ENCODE measurements at regions of chr7 and their contacts with region 1.

Region 1: GRCh38 chr7:12686894-12687717 is at the start of gene ARL4A:
- DNase-seq: peak; percentile 97
- H3K4me3 Mint-ChIP-seq: peak within 1 kb of the TSS; percentile 96
- H3K27ac Mint-ChIP-seq: peak within 1 kb of the TSS; percentile 92
- H3K4me1 Mint-ChIP-seq: peaks cover 26% of the 10 kb centered on the region
- H3K27me3 Mint-ChIP-seq: no peaks in the 10 kb centered on the region
- total RNA-seq, gene ARL4A: 8.1 to 10.0 TPM

Region 2: GRCh38 chr7:12403287-12404181 is 283.6 kb before region 1 on chr7 and contains the start of gene VWDE:
- CTCF ChIA-PET with region 1: no interaction called
- intact Hi-C with region 1: loop called (anchors 2 kb)
- DNase-seq: peak; percentile 76
- H3K4me3 Mint-ChIP-seq: peak within 1 kb of the TSS; percentile 75
- H3K27ac Mint-ChIP-seq: peak within 1 kb of the TSS; percentile 77
- H3K4me1 Mint-ChIP-seq: peaks cover 9% of the 10 kb centered on the region
- H3K27me3 Mint-ChIP-seq: peaks cover 14% of the 10 kb centered on the region
- total RNA-seq, gene VWDE: 1.5 to 1.9 TPM

Region 3: GRCh38 chr7:12638851-12639467 is 48.1 kb before region 1 on chr7:
- CTCF ChIA-PET with region 1: interaction called, 11 read pairs
- intact Hi-C with region 1: loop called (anchors 1 kb)
- DNase-seq: no peak
- H3K4me3 Mint-ChIP-seq: no peak overlapping the region
- H3K27ac Mint-ChIP-seq: no peak overlapping the region
- H3K4me1 Mint-ChIP-seq: peaks cover 19% of the 10 kb centered on the region
- H3K27me3 Mint-ChIP-seq: no peaks in the 10 kb centered on the region

Region 4: GRCh38 chr7:12731214-12731656 is 44.1 kb after region 1 on chr7:
- CTCF ChIA-PET with region 1: interaction called, 3 read pairs
- intact Hi-C with region 1: loop called (anchors 1 kb)
- DNase-seq: peak; percentile 30
- H3K4me3 Mint-ChIP-seq: no peak overlapping the region
- H3K27ac Mint-ChIP-seq: no peak overlapping the region
- H3K4me1 Mint-ChIP-seq: peaks cover 13% of the 10 kb centered on the region
- H3K27me3 Mint-ChIP-seq: no peaks in the 10 kb centered on the region

Region 5: GRCh38 chr7:13117103-13117502 is 430.0 kb after region 1 on chr7:
- CTCF ChIA-PET with region 1: no interaction called
- intact Hi-C with region 1: loop called (anchors 2 kb)
- DNase-seq: no peak
- H3K4me3 Mint-ChIP-seq: no peak overlapping the region
- H3K27ac Mint-ChIP-seq: no peak overlapping the region
- H3K4me1 Mint-ChIP-seq: no peaks in the 10 kb centered on the region
- H3K27me3 Mint-ChIP-seq: peaks cover 5% of the 10 kb centered on the region

Region 6: GRCh38 chr7:13262929-13263530 is 575.9 kb after region 1 on chr7:
- CTCF ChIA-PET with region 1: interaction called, 5 read pairs
- intact Hi-C with region 1: loop called (anchors 1 kb)
- DNase-seq: no peak
- H3K4me3 Mint-ChIP-seq: no peak overlapping the region
- H3K27ac Mint-ChIP-seq: no peak overlapping the region
- H3K4me1 Mint-ChIP-seq: no peaks in the 10 kb centered on the region
- H3K27me3 Mint-ChIP-seq: peaks cover 2% of the 10 kb centered on the region

Measured in activated naive CD4-positive, alpha-beta T cell treated with anti-CD3 and anti-CD28 coated beads for 36 hours (primary cell).